OCI-LY7 (cell line): ENCODE measurements at regions of chr7 and their contacts with region 1.

Region 1: GRCh38 chr7:7640221-7641128 is at the start of gene UMAD1:
- DNase-seq: peak; percentile 99
- H3K4me3 ChIP-seq: peak within 1 kb of the TSS; percentile 92
- H3K27ac ChIP-seq: peak within 1 kb of the TSS; percentile 72
- H3K4me1 ChIP-seq: peaks cover 28% of the 10 kb centered on the region
- CTCF ChIP-seq: no peak
- total RNA-seq, gene UMAD1: 8.7 and 14.2 TPM in 2 replicates

Region 2: DNA sequence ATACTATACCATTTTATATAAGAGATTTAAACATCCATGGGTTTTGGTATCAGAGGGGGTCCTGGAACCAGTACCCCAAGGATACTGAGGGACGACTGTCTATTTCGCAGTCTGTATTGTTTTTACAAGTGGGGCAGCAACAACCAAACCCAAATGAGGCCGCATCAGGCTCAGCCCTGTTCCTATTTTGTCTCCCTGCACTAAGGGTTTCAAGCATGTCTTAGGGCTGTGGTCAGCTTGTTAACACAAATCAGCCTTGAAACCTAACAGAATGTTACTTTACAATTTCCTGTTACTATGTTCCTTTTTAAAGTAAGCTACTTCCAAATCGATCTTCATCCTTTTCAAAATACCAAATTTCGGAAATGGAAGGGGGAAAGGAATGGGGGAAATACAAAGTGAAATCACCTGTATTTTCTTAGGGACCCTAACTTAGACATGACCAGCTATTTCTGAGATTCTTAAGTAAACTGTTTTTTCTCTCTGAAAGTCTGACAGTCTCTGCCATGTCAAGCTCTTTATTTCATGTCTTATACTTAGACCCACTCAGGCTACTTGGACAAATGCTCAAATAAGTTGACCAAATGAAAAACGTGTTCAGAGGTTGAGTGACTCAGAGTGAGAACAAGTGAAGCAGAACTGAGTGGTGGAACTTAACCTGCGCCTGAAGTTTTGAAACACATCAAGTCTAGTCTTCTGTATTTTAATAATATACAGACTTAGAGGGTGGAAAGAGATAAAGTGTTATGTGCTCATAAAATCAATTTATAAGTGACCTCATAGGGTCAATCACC is 382.4 kb before region 1 on chr7:
- CTCF ChIA-PET with region 1: no interaction called
- POLR2A ChIA-PET with region 1: no interaction called
- intact Hi-C with region 1: loop called (anchors 10 kb)
- DNase-seq: peak; percentile 60
- H3K4me3 ChIP-seq: peak overlapping the region; percentile 65
- H3K27ac ChIP-seq: peak overlapping the region; percentile 86
- H3K4me1 ChIP-seq: peaks cover 44% of the 10 kb centered on the region
- CTCF ChIP-seq: no peak

Region 3: DNA sequence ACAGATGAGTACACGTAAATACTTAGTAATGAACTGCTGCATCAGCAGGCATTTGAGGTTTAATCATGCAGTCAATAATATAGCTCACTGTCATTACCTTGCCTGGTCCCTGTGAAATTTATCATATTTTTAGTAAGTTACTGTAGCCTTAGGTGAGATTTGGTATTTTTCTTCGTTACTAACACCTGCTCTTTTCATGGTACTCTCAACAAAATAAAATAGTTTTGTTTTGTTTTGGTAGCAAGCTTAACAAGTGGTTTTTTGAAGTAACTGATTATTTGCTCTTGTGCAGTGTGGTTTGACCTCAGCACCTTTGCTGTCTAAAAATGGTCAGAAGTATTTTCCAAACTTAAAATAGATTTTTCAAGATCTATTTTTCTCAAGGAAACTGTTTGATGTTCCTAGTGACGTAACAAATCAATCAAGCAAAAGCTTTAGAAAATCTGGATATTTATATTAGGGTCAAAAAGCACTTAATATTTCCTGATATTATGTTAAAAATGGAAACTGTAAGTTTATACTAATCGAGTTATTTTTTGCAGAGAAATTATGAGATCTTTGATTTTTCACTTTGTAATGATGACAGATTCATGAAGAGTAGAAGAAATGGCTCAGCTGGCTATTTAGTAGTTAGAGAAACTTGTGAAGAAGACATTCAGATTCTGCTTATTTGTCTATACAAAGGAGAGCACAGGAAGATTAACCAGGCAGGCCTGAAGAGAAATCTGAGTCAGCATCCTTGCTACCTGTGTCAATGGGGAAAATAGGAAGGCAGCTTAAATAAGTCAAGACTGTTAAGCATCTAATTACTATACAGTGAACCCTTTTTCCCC is 98.9 kb after region 1 on chr7:
- CTCF ChIA-PET with region 1: no interaction called
- POLR2A ChIA-PET with region 1: no interaction called
- intact Hi-C with region 1: no loop called
- DNase-seq: no peak
- H3K4me3 ChIP-seq: no peak overlapping the region
- H3K27ac ChIP-seq: no peak overlapping the region
- H3K4me1 ChIP-seq: no peaks in the 10 kb centered on the region
- CTCF ChIP-seq: no peak

Region 4: DNA sequence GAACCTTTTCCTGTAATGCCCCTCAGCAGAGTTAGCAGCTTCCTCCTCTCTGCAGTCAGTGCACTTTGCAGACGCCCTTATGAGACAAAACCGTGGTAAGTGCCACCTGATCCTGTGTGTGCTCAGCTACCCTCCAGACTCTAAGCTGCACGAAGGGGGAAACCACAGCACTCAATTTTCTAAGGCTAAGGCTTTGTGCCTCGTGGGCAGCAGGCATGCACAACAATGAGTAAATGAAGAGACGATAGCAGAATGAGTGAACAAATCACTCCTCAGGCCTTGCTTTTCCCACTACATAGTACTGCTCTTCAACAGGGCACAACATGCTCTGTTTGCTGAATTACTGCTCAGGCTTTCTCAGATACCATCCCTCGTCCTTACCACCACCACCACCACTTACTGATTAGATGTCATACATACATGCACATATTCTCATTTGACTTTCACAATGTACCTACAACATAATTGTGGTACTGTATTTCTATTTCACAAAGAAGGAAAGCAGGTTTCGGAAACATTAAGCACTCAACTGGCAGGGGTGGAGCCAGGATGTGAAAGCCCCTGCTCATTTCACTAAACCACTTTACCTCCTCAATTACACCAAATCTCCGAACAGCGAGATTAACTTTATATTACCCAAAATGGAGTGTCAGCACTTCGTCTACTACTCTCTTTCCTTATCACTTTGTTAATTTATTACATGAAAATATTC is 536.1 kb after region 1 on chr7:
- CTCF ChIA-PET with region 1: no interaction called
- POLR2A ChIA-PET with region 1: no interaction called
- intact Hi-C with region 1: loop called (anchors 2 kb)
- DNase-seq: peak; percentile 84
- H3K4me3 ChIP-seq: peak overlapping the region; percentile 54
- H3K27ac ChIP-seq: peak overlapping the region; percentile 61
- H3K4me1 ChIP-seq: peaks cover 32% of the 10 kb centered on the region
- CTCF ChIP-seq: no peak